ENCODE measurements at regions of chr16 and their contacts with region 1.

Region 1: GRCh38 chr16:63789603-63790002 is 1332.3 kb downstream of the CDH11 start:
- DNase-seq: no peak
- ATAC-seq: no peak

Region 2: GRCh38 chr16:62954144-62955032 is 835.2 kb before region 1 on chr16:
- intact Hi-C with region 1: loop called (anchors 5 kb)
- DNase-seq: no peak
- ATAC-seq: no peak

Measured in sciatic nerve (tissue), 2 donors.